ENCODE measurements at regions of chr3 and their contacts with region 1.

Region 1: GRCh38 chr3:37024092-37024491 is 30.8 kb downstream of the MLH1 start:
- DNase-seq: no peak
- ATAC-seq: no peak
- H3K4me3 Mint-ChIP-seq: no peak overlapping the region
- H3K27ac Mint-ChIP-seq: no peak overlapping the region
- H3K4me1 Mint-ChIP-seq: peaks cover 7% of the 10 kb centered on the region
- H3K27me3 Mint-ChIP-seq: no peaks in the 10 kb centered on the region

Region 2: DNA sequence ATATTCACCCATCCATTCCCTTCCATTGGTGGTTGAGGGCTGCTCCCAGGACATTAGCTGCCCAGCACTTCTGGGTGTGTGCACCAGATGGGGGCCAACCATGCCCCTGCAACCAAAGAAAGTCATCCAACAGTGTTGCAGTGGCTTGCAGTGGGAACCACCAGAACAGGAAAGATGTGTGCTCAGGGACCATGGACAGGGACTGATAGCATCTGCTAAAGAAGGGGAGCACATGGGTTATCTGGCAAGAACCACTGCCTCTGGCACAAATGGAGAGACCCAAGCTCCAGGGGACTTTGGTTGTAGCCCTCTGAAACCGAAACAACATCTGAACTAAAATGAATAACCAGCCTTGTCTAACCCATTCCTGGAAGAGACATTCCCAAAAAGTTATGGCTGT is 267.8 kb before region 1 on chr3:
- CTCF ChIA-PET with region 1: no interaction called
- POLR2A ChIA-PET with region 1: no interaction called
- DNase-seq: no peak
- ATAC-seq: no peak
- H3K4me3 Mint-ChIP-seq: no peak overlapping the region
- H3K27ac Mint-ChIP-seq: no peak overlapping the region
- H3K4me1 Mint-ChIP-seq: no peaks in the 10 kb centered on the region
- H3K27me3 Mint-ChIP-seq: peaks cover 38% of the 10 kb centered on the region

Region 3: DNA sequence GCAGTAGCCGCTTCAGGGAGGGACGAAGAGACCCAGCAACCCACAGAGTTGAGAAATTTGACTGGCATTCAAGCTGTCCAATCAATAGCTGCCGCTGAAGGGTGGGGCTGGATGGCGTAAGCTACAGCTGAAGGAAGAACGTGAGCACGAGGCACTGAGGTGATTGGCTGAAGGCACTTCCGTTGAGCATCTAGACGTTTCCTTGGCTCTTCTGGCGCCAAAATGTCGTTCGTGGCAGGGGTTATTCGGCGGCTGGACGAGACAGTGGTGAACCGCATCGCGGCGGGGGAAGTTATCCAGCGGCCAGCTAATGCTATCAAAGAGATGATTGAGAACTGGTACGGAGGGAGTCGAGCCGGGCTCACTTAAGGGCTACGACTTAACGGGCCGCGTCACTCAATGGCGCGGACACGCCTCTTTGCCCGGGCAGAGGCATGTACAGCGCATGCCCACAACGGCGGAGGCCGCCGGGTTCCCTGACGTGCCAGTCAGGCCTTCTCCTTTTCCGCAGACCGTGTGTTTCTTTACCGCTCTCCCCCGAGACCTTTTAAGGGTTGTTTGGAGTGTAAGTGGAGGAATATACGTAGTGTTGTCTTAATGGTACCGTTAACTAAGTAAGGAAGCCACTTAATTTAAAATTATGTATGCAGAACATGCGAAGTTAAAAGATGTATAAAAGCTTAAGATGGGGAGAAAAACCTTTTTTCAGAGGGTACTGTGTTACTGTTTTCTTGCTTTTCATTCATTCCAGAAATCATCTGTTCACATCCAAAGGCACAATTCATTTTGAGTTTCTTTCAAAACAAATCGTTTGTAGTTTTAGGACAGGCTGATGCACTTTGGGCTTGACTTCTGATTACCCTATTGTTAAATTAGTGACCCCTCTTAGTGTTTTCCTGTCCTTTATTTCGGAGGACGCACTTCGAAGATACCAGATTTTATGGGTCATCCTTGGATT is 30.5 kb before region 1 on chr3 and contains the start of gene MLH1:
- CTCF ChIA-PET with region 1: interaction called, 11 read pairs
- POLR2A ChIA-PET with region 1: no interaction called
- DNase-seq: peak; percentile 95
- ATAC-seq: peak; percentile 91
- H3K4me3 Mint-ChIP-seq: no peak within 1 kb of the TSS
- H3K27ac Mint-ChIP-seq: no peak within 1 kb of the TSS
- H3K4me1 Mint-ChIP-seq: peaks cover 42% of the 10 kb centered on the region
- H3K27me3 Mint-ChIP-seq: no peaks in the 10 kb centered on the region
- total RNA-seq, gene MLH1: 60.9 to 65.3 TPM

Region 4: GRCh38 chr3:37210230-37210629 is 186.1 kb after region 1 on chr3:
- CTCF ChIA-PET with region 1: interaction called, 25 read pairs
- POLR2A ChIA-PET with region 1: interaction called, 3 read pairs
- DNase-seq: no peak
- ATAC-seq: no peak
- H3K4me3 Mint-ChIP-seq: no peak overlapping the region
- H3K27ac Mint-ChIP-seq: no peak overlapping the region
- H3K4me1 Mint-ChIP-seq: no peaks in the 10 kb centered on the region
- H3K27me3 Mint-ChIP-seq: no peaks in the 10 kb centered on the region

Region 5: GRCh38 chr3:37256447-37256846 is 232.4 kb after region 1 on chr3:
- CTCF ChIA-PET with region 1: no interaction called
- POLR2A ChIA-PET with region 1: no interaction called
- DNase-seq: no peak
- ATAC-seq: no peak
- H3K4me3 Mint-ChIP-seq: no peak overlapping the region
- H3K27ac Mint-ChIP-seq: no peak overlapping the region
- H3K4me1 Mint-ChIP-seq: peaks cover 6% of the 10 kb centered on the region
- H3K27me3 Mint-ChIP-seq: no peaks in the 10 kb centered on the region

Measured in activated CD8-positive, alpha-beta T cell treated with anti-CD3 and anti-CD28 coated beads, Interleukin-2, amount 10 ng/mL, durations not matched to agents 7 days and 5 days (primary cell).